Ovary (tissue), 10 donors: ENCODE measurements at regions of chr2 and their contacts with region 1.

Region 1: GRCh38 chr2:69138793-69139510 is 126.0 kb downstream of the ANTXR1 start:
- DNase-seq: peak in 1 of 5 donors; percentile 54
- H3K4me3 ChIP-seq: no peak overlapping the region
- H3K27ac ChIP-seq: no peak overlapping the region
- H3K4me1 ChIP-seq: no peaks in the 10 kb centered on the region
- H3K27me3 ChIP-seq: no peaks in the 10 kb centered on the region
- CTCF ChIP-seq: no peak
- EP300 ChIP-seq: no peak
- POLR2A ChIP-seq: no peak

Region 2: GRCh38 chr2:68272246-68272994 is 866.5 kb before region 1 on chr2:
- intact Hi-C with region 1: no loop called
- DNase-seq: no peak
- H3K4me3 ChIP-seq: no peak overlapping the region
- H3K27ac ChIP-seq: no peak overlapping the region
- H3K4me1 ChIP-seq: no peaks in the 10 kb centered on the region
- H3K27me3 ChIP-seq: no peaks in the 10 kb centered on the region
- CTCF ChIP-seq: no peak
- EP300 ChIP-seq: no peak
- POLR2A ChIP-seq: no peak

Region 3: GRCh38 chr2:69315160-69315761 is 176.3 kb after region 1 on chr2:
- intact Hi-C with region 1: loop called in 1 of 4 experiments (anchors 2 kb)
- DNase-seq: no peak
- H3K4me3 ChIP-seq: no peak overlapping the region
- H3K27ac ChIP-seq: no peak overlapping the region
- H3K4me1 ChIP-seq: peaks cover 5% of the 10 kb centered on the region
- H3K27me3 ChIP-seq: no peaks in the 10 kb centered on the region
- CTCF ChIP-seq: no peak
- EP300 ChIP-seq: no peak
- POLR2A ChIP-seq: no peak